Naive thymus-derived CD4-positive, alpha-beta T cell (primary cell): ENCODE measurements at regions of chr11 and their contacts with region 1.

Region 1: GRCh38 chr11:59053387-59053786 is 32.7 kb upstream of the GLYATL1B start:
- DNase-seq: peak; percentile 44 to 84 (median 69)
- ATAC-seq: peak; percentile 82
- H3K4me3 ChIP-seq: no peak overlapping the region
- H3K4me3 Mint-ChIP-seq: no peak overlapping the region
- H3K27ac ChIP-seq: no peak overlapping the region
- H3K27ac Mint-ChIP-seq: no peak overlapping the region
- H3K4me1 ChIP-seq: no peaks in the 10 kb centered on the region
- H3K4me1 Mint-ChIP-seq: peaks cover 5 to 7% (median 6%) of the 10 kb centered on the region in 7 donors
- H3K27me3 ChIP-seq: no peaks in the 10 kb centered on the region
- H3K27me3 Mint-ChIP-seq: peaks cover 2 to 30% (median 11%) of the 10 kb centered on the region in 5 donors

Region 2: GRCh38 chr11:57741132-57742086 is 1312.0 kb before region 1 on chr11 and contains the start of gene SELENOH:
- CTCF ChIA-PET with region 1: no interaction called
- POLR2A ChIA-PET with region 1: no interaction called
- intact Hi-C with region 1: loop called in 1 of 2 experiments (anchors 10 kb)
- DNase-seq: peak; percentile 75 to 96 (median 91)
- ATAC-seq: peak; percentile 94
- H3K4me3 ChIP-seq: peak within 1 kb of the TSS; percentile 86
- H3K4me3 Mint-ChIP-seq: peak within 1 kb of the TSS; percentile 90 to 100 (median 99)
- H3K27ac ChIP-seq: peak within 1 kb of the TSS; percentile 93
- H3K27ac Mint-ChIP-seq: peak within 1 kb of the TSS; percentile 97 to 100 (median 98)
- H3K4me1 ChIP-seq: peaks cover 16 to 23% of the 10 kb centered on the region in 2 donors
- H3K4me1 Mint-ChIP-seq: peaks cover 12 to 50% (median 41%) of the 10 kb centered on the region in 7 donors
- H3K27me3 ChIP-seq: no peaks in the 10 kb centered on the region
- H3K27me3 Mint-ChIP-seq: no peaks in the 10 kb centered on the region
- total RNA-seq, gene SELENOH: 93.6 to 193 (median 124) TPM

Region 3: GRCh38 chr11:58923300-58923788 is 130.0 kb before region 1 on chr11:
- CTCF ChIA-PET with region 1: no interaction called
- POLR2A ChIA-PET with region 1: no interaction called
- intact Hi-C with region 1: loop called in 1 of 2 experiments (anchors 10 kb)
- DNase-seq: peak in 7 of 9 donors; percentile 7 to 44 (median 29)
- ATAC-seq: peak; percentile 66
- H3K4me3 ChIP-seq: no peak overlapping the region
- H3K4me3 Mint-ChIP-seq: peak overlapping the region in 8 of 10 donors; percentile 22 to 77 (median 45)
- H3K27ac ChIP-seq: no peak overlapping the region
- H3K27ac Mint-ChIP-seq: peak overlapping the region in 3 of 9 donors; percentile 33 to 74 (median 40)
- H3K4me1 ChIP-seq: peaks cover 0 to 6% of the 10 kb centered on the region in 2 donors
- H3K4me1 Mint-ChIP-seq: peaks cover 6 to 26% (median 22%) of the 10 kb centered on the region in 7 donors
- H3K27me3 ChIP-seq: no peaks in the 10 kb centered on the region
- H3K27me3 Mint-ChIP-seq: peaks cover 0 to 10% (median 6%) of the 10 kb centered on the region in 5 donors

Region 4: DNA sequence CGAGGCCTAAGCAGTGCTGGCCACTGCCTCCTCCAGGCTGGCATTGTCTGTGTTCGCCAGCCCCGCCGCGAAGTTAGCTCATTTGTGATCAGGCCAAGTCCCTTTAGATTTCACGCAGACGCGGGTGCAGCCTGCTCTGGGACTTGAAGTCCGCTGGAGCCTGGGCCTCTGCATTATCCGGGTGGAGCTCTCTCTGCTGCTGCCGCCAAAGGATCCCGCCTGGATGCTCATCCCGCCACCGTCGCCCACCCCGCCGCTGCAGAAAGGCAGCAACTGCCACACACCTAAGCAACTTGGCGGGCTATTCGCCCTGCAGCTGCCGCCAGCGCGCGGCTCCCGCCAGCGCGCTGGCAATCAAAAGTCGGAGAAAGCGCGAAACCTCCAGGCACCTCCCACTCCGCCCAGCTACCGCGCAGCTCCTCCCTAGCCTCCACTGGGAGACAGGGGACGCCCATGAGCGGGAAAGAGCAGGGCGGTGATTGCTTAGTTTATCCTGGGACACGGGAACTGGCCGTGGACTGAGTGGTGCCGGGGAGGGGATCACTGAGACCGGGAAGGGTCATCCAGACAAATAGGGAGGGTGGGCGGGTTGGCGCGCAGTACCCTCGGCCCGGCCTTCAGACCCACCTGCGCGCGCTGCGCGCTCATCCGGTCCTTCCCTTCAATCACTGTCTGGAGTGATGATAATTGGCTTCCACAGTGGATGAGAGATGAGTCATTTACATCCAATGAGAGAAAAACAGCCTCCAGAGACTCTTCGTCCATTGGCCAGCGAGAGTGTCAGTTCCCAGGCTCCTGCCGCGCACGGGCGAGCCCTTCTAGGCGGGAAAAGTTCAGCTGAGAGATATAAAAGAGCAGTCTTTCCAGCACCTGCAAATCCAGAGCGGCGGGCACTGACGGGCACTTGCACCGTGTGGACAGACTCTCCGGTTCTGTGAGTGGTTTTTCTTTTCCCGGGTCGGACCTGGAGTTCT is 53.3 kb after region 1 on chr11 and contains the start of gene FAM111B:
- CTCF ChIA-PET with region 1: no interaction called
- POLR2A ChIA-PET with region 1: no interaction called
- intact Hi-C with region 1: loop called in 1 of 2 experiments (anchors 1 kb)
- DNase-seq: peak; percentile 10 to 76 (median 39)
- ATAC-seq: peak; percentile 85
- H3K4me3 ChIP-seq: peak within 1 kb of the TSS; percentile 65
- H3K4me3 Mint-ChIP-seq: peak within 1 kb of the TSS; percentile 71 to 92 (median 83)
- H3K27ac ChIP-seq: no peak within 1 kb of the TSS
- H3K27ac Mint-ChIP-seq: peak within 1 kb of the TSS in 3 of 9 donors; percentile 13 to 83 (median 49)
- H3K4me1 ChIP-seq: peaks cover 12% of the 10 kb centered on the region in 2 donors
- H3K4me1 Mint-ChIP-seq: peaks cover 13 to 79% (median 26%) of the 10 kb centered on the region in 7 donors
- H3K27me3 ChIP-seq: peaks cover 0 to 5% of the 10 kb centered on the region in 2 donors
- H3K27me3 Mint-ChIP-seq: peaks cover 0 to 38% (median 34%) of the 10 kb centered on the region in 5 donors
- total RNA-seq, gene FAM111B: 0.11 to 79.8 (median 0.42) TPM in 4 of 5 experiments, not detected in the other

Region 5: GRCh38 chr11:59135648-59136461 is 82.5 kb after region 1 on chr11:
- CTCF ChIA-PET with region 1: interaction called, 19 read pairs
- POLR2A ChIA-PET with region 1: interaction called, 3 read pairs
- intact Hi-C with region 1: loop called (anchors 1 kb)
- DNase-seq: peak; percentile 72 to 92 (median 84)
- ATAC-seq: peak; percentile 100
- H3K4me3 ChIP-seq: no peak overlapping the region
- H3K4me3 Mint-ChIP-seq: peak overlapping the region in 9 of 10 donors; percentile 41 to 85 (median 66)
- H3K27ac ChIP-seq: no peak overlapping the region
- H3K27ac Mint-ChIP-seq: peak overlapping the region in 5 of 9 donors; percentile 0 to 87 (median 68)
- H3K4me1 ChIP-seq: peaks cover 4 to 5% of the 10 kb centered on the region in 2 donors
- H3K4me1 Mint-ChIP-seq: peaks cover 3 to 33% (median 10%) of the 10 kb centered on the region in 7 donors
- H3K27me3 ChIP-seq: no peaks in the 10 kb centered on the region
- H3K27me3 Mint-ChIP-seq: no peaks in the 10 kb centered on the region

Region 6: GRCh38 chr11:59158206-59159068 is 105.0 kb after region 1 on chr11:
- CTCF ChIA-PET with region 1: interaction called, 31 read pairs
- POLR2A ChIA-PET with region 1: no interaction called
- intact Hi-C with region 1: loop called (anchors 1 kb)
- DNase-seq: peak in 8 of 9 donors; percentile 53 to 75 (median 70)
- ATAC-seq: peak; percentile 97
- H3K4me3 ChIP-seq: no peak overlapping the region
- H3K4me3 Mint-ChIP-seq: peak overlapping the region in 1 of 10 donors; percentile 18
- H3K27ac ChIP-seq: no peak overlapping the region
- H3K27ac Mint-ChIP-seq: peak overlapping the region in 7 of 9 donors; percentile 8 to 65 (median 50)
- H3K4me1 ChIP-seq: no peaks in the 10 kb centered on the region
- H3K4me1 Mint-ChIP-seq: peaks cover 4 to 16% (median 5%) of the 10 kb centered on the region in 7 donors
- H3K27me3 ChIP-seq: no peaks in the 10 kb centered on the region
- H3K27me3 Mint-ChIP-seq: peaks cover 9 to 14% (median 9%) of the 10 kb centered on the region in 5 donors

Region 7: DNA sequence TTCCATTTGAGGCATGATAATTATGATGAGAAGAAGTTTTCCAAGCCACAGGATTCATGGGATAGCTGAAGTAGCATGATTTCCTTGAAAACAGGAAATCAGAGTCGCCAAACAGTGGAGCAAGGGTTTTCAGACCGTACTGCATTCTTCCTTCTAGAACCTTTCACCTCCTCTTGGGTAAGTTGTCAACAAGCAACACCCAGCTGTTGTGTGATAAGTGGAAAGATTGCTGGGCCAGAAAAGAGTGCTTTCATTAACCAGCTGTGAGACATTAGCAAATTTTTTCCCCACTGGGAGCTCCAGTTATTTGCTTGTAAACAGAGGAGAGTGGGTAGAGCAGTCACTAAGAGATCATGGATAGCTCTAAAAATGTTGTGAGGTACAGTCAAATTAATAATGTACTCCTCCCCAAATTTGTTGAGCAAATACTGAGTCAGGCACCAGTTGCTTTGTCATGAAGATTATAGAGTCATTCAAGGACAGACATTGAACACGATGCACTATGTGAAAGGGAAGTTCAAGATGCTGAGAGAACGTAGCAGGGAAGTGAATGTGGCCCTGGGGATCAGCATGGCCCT is 171.1 kb after region 1 on chr11:
- CTCF ChIA-PET with region 1: no interaction called
- POLR2A ChIA-PET with region 1: no interaction called
- intact Hi-C with region 1: no loop called
- DNase-seq: no peak
- ATAC-seq: peak; percentile 73
- H3K4me3 ChIP-seq: no peak overlapping the region
- H3K4me3 Mint-ChIP-seq: no peak overlapping the region
- H3K27ac ChIP-seq: no peak overlapping the region
- H3K27ac Mint-ChIP-seq: no peak overlapping the region
- H3K4me1 ChIP-seq: no peaks in the 10 kb centered on the region
- H3K4me1 Mint-ChIP-seq: peaks cover 0 to 16% (median 0%) of the 10 kb centered on the region in 7 donors
- H3K27me3 ChIP-seq: no peaks in the 10 kb centered on the region
- H3K27me3 Mint-ChIP-seq: peaks cover 0 to 7% (median 0%) of the 10 kb centered on the region in 5 donors